PC-9 (cell line): ENCODE measurements at regions of chr2 and their contacts with region 1.

Region 1: GRCh38 chr2:26720322-26721166 is 28.0 kb downstream of the KCNK3 start:
- DNase-seq: peak; percentile 53 to 60
- H3K4me3 ChIP-seq: no peak overlapping the region
- H3K27ac ChIP-seq: peak overlapping the region; percentile 47; the same call in 1 of the 2 replicates
- H3K4me1 ChIP-seq: peaks cover 59% of the 10 kb centered on the region
- H3K27me3 ChIP-seq: no peaks in the 10 kb centered on the region
- CTCF ChIP-seq: no peak

Region 2: DNA sequence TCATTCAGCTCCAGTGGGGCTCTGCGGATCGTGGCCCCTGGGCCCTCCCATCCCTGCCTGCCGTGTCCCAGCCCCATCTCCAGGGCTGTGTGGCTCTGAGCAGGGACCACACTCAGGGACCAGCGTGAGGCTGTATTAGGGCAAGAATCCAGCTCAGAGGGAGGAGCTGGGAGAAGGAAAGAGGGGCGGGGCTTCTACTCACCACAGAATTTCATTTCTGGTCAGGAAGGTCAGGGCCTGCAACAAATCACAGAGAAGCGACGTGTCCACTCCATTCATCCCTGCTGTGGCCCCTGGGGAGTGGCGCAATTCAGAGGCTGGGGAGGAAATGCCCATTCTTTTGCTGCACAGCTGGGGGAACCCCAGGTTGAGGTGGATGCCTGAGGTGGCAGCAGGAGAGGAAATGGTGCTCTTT is 80.2 kb before region 1 on chr2:
- CTCF ChIA-PET with region 1: no interaction called
- POLR2A ChIA-PET with region 1: no interaction called
- intact Hi-C with region 1: loop called (anchors 2 kb)
- DNase-seq: peak; percentile 85 to 90
- H3K4me3 ChIP-seq: no peak overlapping the region
- H3K27ac ChIP-seq: peak overlapping the region; percentile 51
- H3K4me1 ChIP-seq: peaks cover 35% of the 10 kb centered on the region
- H3K27me3 ChIP-seq: no peaks in the 10 kb centered on the region
- CTCF ChIP-seq: no peak

Region 3: GRCh38 chr2:26892922-26893524 is 172.5 kb after region 1 on chr2:
- CTCF ChIA-PET with region 1: no interaction called
- POLR2A ChIA-PET with region 1: no interaction called
- intact Hi-C with region 1: no loop called
- DNase-seq: no peak
- H3K4me3 ChIP-seq: no peak overlapping the region
- H3K27ac ChIP-seq: no peak overlapping the region
- H3K4me1 ChIP-seq: no peaks in the 10 kb centered on the region
- H3K27me3 ChIP-seq: peaks cover 46% of the 10 kb centered on the region
- CTCF ChIP-seq: no peak